A549 (cell line): ENCODE measurements at regions of chr5 and their contacts with region 1.

Region 1: GRCh38 chr5:57887851-57888621 is 405.4 kb upstream of the ACTBL2 start:
- DNase-seq: peak; percentile 70 to 85
- ATAC-seq: peak; percentile 95 to 97
- H3K4me3 ChIP-seq: no peak overlapping the region
- H3K27ac ChIP-seq: peak overlapping the region; percentile 71 to 86
- H3K4me1 ChIP-seq: peaks cover 36% of the 10 kb centered on the region
- CTCF ChIP-seq: peak; percentile 80
- EP300 ChIP-seq: no peak
- POLR2A ChIP-seq: no peak
- RAD21 ChIP-seq: peak; percentile 94 to 97

Region 2: DNA sequence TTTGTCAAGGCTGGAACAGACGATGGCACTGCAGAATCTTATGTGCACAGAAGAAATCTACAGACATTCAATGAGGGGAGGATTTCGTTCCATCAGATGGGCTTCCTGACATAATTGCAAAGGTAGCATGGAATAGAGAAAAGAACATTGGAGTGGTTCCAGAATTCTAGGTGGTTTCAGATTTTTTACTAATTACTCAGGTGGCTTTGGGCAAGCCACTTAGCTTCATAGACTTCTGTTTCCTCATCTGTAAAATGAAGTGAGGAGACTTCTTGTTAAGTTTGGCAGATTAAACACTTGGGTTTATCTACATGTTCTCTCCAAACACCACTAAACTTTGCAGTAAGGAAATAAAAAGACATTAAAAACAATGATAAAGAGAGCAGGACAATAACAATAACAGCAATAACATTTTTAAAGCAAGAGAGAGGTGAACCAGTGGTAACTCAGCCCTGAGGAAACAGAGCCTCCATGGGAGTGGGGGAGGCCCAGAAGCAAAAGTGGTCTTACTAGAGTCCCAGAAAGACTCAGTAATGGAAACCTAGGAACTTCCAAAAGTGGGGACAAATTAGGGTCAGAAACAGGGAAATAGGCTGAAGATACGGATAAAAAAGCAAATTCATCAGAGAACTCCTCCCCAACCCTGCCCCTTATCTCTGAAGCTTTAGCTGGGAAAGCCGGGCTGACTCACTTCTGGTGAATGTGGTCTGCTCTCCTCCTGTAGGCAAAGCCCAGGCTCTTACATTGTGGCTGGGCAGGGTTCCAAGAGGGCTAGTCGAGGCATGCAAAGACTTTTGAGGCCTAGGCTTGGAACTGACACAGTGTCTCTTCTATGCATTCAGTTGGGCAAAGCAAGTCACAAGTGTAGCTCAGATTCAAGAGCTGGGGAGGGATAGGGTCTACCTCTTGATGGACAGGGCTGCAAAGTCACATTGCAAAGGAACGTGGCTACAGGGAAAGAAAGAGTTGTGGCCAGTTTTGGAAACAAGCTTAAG is 393.6 kb before region 1 on chr5:
- CTCF ChIA-PET with region 1: interaction called, 17 read pairs
- POLR2A ChIA-PET with region 1: interaction called, 6 read pairs
- DNase-seq: peak; percentile 54 to 71
- ATAC-seq: peak; percentile 81 to 95; a peak in 5 of 6 replicates
- H3K4me3 ChIP-seq: no peak overlapping the region
- H3K27ac ChIP-seq: peak overlapping the region; percentile 74 to 88
- H3K4me1 ChIP-seq: peaks cover 21% of the 10 kb centered on the region
- CTCF ChIP-seq: no peak
- EP300 ChIP-seq: no peak; a peak in 1 of 5 replicates
- POLR2A ChIP-seq: no peak
- RAD21 ChIP-seq: peak; percentile 20 to 31; a peak in 1 of 5 replicates

Region 3: DNA sequence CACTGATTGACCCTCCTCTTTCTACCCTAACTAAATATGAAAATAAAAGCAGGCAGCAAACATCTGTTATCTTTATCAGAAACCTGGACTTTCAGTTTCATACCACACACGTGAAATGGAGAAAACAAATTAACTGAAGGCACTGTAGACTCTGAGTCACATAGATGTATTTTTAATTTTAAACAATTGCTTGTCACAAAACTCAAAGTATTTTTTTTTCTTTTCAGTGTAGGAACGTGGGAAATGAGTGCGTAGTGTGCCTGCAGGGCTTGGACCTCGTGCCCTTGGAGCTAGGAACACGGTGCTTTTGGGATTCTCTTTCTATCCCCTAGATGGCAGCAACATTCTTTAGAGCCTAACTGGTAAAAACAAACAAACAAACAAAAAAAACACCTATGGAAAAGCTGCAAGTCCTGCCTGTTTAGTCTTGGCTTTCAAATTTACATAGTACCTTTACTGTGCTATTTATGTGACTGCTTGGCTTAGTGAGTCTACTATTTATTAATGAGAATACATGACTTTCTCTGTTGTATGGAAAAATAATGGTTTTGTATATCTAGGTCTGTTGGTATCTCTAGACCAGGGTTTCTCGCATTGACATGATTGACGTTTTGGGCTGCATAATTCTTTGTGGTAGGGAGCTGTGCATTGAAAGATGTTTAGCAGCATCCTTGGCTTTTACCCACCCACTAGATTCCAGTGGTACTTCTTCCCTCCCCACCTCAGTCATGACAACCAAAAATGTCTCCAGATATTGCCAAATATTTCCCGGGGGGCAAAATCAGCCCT is 388.6 kb before region 1 on chr5:
- CTCF ChIA-PET with region 1: interaction called, 17 read pairs
- POLR2A ChIA-PET with region 1: interaction called, 6 read pairs
- DNase-seq: peak; percentile 47 to 74
- ATAC-seq: peak; percentile 85; a peak in 5 of 6 replicates
- H3K4me3 ChIP-seq: peak overlapping the region; percentile 23; the same call in 1 of the 3 replicates
- H3K27ac ChIP-seq: peak overlapping the region; percentile 57 to 66
- H3K4me1 ChIP-seq: peaks cover 21% of the 10 kb centered on the region
- CTCF ChIP-seq: peak; percentile 92
- EP300 ChIP-seq: no peak
- POLR2A ChIP-seq: no peak
- RAD21 ChIP-seq: peak; percentile 96

Region 4: DNA sequence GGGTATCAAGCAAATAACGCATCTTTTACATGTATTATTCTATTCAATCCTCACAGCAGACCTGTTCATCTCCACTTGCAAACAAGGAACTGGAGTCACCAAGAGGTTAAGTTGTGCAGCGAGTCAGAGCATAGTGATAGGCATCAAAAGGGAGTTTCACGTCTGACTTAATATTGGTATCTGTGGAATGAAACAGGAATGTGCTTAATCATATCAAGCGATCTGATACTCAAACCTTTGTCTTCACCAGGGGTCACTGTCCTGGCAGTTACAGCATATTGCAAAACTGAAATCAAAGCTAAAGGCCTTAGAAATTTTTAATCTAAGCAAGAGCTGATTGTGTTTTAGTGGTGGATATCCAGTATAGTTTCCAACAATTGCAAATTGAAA is 300.2 kb after region 1 on chr5:
- CTCF ChIA-PET with region 1: interaction called, 7 read pairs
- POLR2A ChIA-PET with region 1: interaction called, 10 read pairs
- DNase-seq: peak; percentile 73 to 98
- ATAC-seq: peak; percentile 96
- H3K4me3 ChIP-seq: no peak overlapping the region
- H3K27ac ChIP-seq: peak overlapping the region; percentile 91 to 97
- H3K4me1 ChIP-seq: peaks cover 85% of the 10 kb centered on the region
- CTCF ChIP-seq: peak; percentile 33; the same call in 2 of the 3 replicates
- EP300 ChIP-seq: peak; percentile 97 to 99
- POLR2A ChIP-seq: no peak
- RAD21 ChIP-seq: peak; percentile 74 to 87

Region 5: GRCh38 chr5:58455066-58455465 is 567.0 kb after region 1 on chr5:
- CTCF ChIA-PET with region 1: interaction called, 147 read pairs
- POLR2A ChIA-PET with region 1: interaction called, 49 read pairs
- DNase-seq: no peak
- ATAC-seq: no peak
- H3K4me3 ChIP-seq: peak overlapping the region; percentile 91
- H3K27ac ChIP-seq: peak overlapping the region; percentile 96 to 100
- H3K4me1 ChIP-seq: peaks cover 38% of the 10 kb centered on the region
- CTCF ChIP-seq: no peak
- EP300 ChIP-seq: no peak
- POLR2A ChIP-seq: no peak
- RAD21 ChIP-seq: no peak